Endothelial cell of umbilical vein (primary cell): ENCODE measurements at regions of chr13 and their contacts with region 1.

Region 1: DNA sequence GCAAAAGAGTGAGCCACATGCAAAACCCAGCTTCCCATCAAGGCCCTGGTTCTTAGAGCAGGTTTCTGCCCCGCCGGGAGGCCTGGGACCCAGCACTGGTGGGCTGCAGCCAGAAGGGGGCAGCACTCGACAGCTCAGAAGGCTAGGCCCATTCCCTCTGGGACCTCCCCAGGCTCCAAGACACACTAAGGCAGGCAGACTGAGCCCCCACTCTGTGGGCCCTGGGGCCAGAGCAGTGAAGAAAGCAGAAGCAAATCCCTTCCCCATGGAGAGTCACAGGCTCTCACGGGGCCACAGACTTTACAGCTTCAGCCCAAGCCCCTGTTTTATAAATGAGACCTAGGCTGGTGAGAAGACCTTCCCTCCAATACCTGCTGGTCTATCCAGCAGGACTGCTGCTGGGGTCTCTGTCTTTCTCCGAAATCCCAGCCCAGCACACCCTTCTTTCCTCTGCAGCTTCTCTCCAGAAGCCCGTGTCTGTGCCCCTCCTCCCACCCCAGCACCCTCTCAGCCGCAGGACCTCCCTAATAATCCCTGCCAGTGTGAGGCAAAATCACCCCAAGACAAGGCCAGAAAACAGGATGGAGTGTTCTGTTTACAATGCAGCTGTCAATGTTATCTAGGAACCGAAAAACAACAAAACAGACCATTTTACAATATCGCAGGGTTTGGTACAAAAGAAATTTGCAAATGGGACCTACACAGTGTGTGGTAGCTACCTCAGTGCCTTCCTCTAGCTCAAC is 109.3 kb downstream of the ABCC4 start:
- DNase-seq: peak; percentile 78
- H3K4me3 ChIP-seq: no peak overlapping the region
- H3K27ac ChIP-seq: no peak overlapping the region
- H3K4me1 ChIP-seq: no peaks in the 10 kb centered on the region
- H3K27me3 ChIP-seq: no peaks in the 10 kb centered on the region
- CTCF ChIP-seq: peak; percentile 90 to 97
- POLR2A ChIP-seq: no peak

Region 2: GRCh38 chr13:94753327-94753726 is 438.7 kb before region 1 on chr13:
- CTCF ChIA-PET with region 1: no interaction called
- POLR2A ChIA-PET with region 1: no interaction called
- dilution Hi-C with region 1: no loop called
- intact Hi-C with region 1: no loop called
- DNase-seq: no peak
- H3K4me3 ChIP-seq: no peak overlapping the region
- H3K27ac ChIP-seq: no peak overlapping the region
- H3K4me1 ChIP-seq: no peaks in the 10 kb centered on the region
- H3K27me3 ChIP-seq: peaks cover 0 to 4% of the 10 kb centered on the region in 2 experiments
- CTCF ChIP-seq: no peak
- POLR2A ChIP-seq: no peak

Region 3: DNA sequence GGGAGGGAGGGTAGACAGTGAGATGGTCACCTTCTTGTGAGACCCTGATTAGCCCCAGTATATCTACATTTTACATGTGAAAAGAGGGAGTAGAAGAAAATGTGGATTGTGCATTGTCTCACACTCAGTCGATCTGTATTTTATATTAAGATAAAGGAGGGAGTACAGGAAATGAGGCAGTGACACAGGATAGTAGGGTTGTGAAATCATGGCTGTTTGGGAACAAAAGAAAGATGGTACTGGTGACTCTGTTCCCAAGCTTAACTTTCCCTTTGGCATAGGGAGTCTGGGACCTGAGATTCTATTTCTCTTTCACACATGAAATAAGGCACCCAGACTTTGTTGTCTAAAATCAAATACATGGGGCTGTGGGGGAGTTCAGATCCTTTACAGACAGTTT is 85.4 kb before region 1 on chr13:
- CTCF ChIA-PET with region 1: no interaction called
- POLR2A ChIA-PET with region 1: no interaction called
- dilution Hi-C with region 1: no loop called
- intact Hi-C with region 1: no loop called
- DNase-seq: no peak
- H3K4me3 ChIP-seq: no peak overlapping the region
- H3K27ac ChIP-seq: no peak overlapping the region
- H3K4me1 ChIP-seq: no peaks in the 10 kb centered on the region
- H3K27me3 ChIP-seq: no peaks in the 10 kb centered on the region
- CTCF ChIP-seq: no peak
- POLR2A ChIP-seq: no peak

Region 4: DNA sequence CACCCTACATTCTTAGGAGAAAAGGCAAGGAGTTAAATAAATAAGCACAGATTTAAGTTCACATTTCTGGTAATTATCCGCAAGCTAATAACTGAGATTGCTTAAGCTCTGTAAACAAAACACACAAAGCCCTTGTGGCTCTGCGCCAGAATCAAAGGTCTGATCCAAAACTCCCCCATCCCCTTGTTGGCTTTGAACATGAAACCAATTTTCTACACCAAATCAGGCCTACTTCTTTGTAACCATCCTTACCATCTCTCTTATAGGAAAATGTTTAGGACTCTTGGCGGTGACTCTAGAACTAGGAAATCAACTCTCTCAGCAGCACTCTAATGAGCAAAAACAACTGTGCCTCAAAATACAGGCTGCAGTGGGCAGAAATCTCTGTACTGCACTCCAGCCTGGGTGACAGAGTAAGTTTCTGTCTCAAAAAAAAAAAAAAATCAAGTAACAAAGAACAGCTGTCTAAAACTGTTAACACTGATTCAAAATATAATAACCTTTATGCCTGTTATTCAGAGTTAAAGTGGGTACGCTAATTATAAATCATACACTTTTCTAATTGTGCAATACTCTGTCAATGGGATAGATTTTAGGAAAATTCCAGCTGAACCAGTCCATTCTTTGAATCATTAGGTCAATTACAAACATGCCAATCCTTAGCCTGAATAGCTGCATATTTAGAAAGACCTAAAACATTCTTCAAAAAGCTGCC is 83.5 kb after region 1 on chr13:
- CTCF ChIA-PET with region 1: interaction called, 11 read pairs
- POLR2A ChIA-PET with region 1: no interaction called
- dilution Hi-C with region 1: no loop called
- intact Hi-C with region 1: no loop called
- DNase-seq: no peak
- H3K4me3 ChIP-seq: no peak overlapping the region
- H3K27ac ChIP-seq: no peak overlapping the region
- H3K4me1 ChIP-seq: peaks cover 19% of the 10 kb centered on the region
- H3K27me3 ChIP-seq: no peaks in the 10 kb centered on the region
- CTCF ChIP-seq: no peak
- POLR2A ChIP-seq: no peak

Region 5: GRCh38 chr13:95301183-95301967 is 109.4 kb after region 1 on chr13 and contains the start of gene ABCC4:
- CTCF ChIA-PET with region 1: interaction called, 69 read pairs
- POLR2A ChIA-PET with region 1: no interaction called
- dilution Hi-C with region 1: no loop called
- intact Hi-C with region 1: loop called (anchors 1 kb)
- DNase-seq: peak; percentile 72
- H3K4me3 ChIP-seq: peak within 1 kb of the TSS; percentile 73 to 91 (median 83)
- H3K27ac ChIP-seq: peak within 1 kb of the TSS; percentile 84
- H3K4me1 ChIP-seq: peaks cover 18% of the 10 kb centered on the region
- H3K27me3 ChIP-seq: no peaks in the 10 kb centered on the region
- CTCF ChIP-seq: peak in 1 of 2 donors; percentile 8
- POLR2A ChIP-seq: peak; percentile 21
- total RNA-seq, gene ABCC4: 14.7 and 15.9 TPM in 2 replicates

Region 6: DNA sequence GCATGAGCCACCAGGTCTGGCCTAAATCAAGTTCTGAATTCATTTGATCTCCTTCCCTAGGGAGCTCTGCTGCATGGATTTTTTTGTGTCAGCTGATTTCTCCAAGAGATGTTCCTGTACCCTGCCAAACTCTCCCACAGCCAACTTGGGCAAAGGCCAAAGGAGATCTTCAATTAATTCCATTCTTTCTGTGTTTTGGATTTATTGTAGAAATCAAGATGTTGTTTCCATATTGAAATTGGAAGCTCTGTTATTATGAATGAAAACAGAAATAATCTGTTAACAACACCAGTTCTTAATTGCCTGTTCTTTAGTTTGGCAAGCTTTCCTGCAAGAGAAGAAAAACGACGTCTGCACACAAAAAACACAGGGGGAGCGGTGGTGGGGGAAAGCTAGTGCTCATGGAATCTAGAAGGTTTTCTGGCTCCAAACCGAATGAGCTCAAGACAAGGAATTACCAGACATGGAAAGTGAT is 195.8 kb after region 1 on chr13:
- CTCF ChIA-PET with region 1: interaction called, 399 read pairs
- POLR2A ChIA-PET with region 1: no interaction called
- dilution Hi-C with region 1: no loop called
- intact Hi-C with region 1: no loop called
- DNase-seq: no peak
- H3K4me3 ChIP-seq: no peak overlapping the region
- H3K27ac ChIP-seq: no peak overlapping the region
- H3K4me1 ChIP-seq: no peaks in the 10 kb centered on the region
- H3K27me3 ChIP-seq: peaks cover 8 to 13% of the 10 kb centered on the region in 2 experiments
- CTCF ChIP-seq: no peak
- POLR2A ChIP-seq: no peak

Region 7: GRCh38 chr13:95474992-95475391 is 283.0 kb after region 1 on chr13:
- CTCF ChIA-PET with region 1: interaction called, 30 read pairs
- POLR2A ChIA-PET with region 1: no interaction called
- dilution Hi-C with region 1: no loop called
- intact Hi-C with region 1: loop called (anchors 1 kb)
- DNase-seq: no peak
- H3K4me3 ChIP-seq: no peak overlapping the region
- H3K27ac ChIP-seq: no peak overlapping the region
- H3K4me1 ChIP-seq: peaks cover 4% of the 10 kb centered on the region
- H3K27me3 ChIP-seq: peaks cover 0 to 2% of the 10 kb centered on the region in 2 experiments
- CTCF ChIP-seq: no peak
- POLR2A ChIP-seq: no peak